ENCODE measurements at regions of chr3 and their contacts with region 1.

Region 1: GRCh38 chr3:150408221-150409102 is at the start of gene TSC22D2:
- DNase-seq: peak; percentile 99
- ATAC-seq: peak; percentile 71
- H3K4me3 Mint-ChIP-seq: peak within 1 kb of the TSS; percentile 94
- H3K27ac Mint-ChIP-seq: peak within 1 kb of the TSS; percentile 99
- H3K4me1 Mint-ChIP-seq: peaks cover 34% of the 10 kb centered on the region
- H3K27me3 Mint-ChIP-seq: no peaks in the 10 kb centered on the region
- CTCF ChIP-seq: no peak
- total RNA-seq, gene TSC22D2: 35.9 and 38.9 TPM in 2 replicates

Region 2: DNA sequence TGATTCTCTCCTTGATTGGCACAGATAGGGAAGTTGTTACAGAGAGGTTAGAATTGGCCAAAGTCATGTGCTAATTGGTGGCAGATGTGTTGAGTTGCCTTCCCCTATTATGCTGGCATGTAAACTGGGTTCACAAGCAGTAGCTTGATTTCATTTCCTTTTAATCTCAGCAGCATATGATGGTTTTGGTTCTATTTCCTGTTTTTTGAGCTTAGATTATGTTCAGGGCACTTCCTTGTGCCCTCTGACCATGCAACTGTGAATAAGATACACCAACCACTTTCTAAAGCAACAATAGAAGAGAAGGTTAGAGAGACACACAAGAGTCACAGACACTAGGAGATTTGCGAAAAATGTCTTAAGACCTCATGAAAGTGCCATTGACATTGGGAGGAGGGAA is 1262.5 kb before region 1 on chr3:
- CTCF ChIA-PET with region 1: no interaction called
- POLR2A ChIA-PET with region 1: no interaction called
- intact Hi-C with region 1: loop called (anchors 10 kb)
- DNase-seq: no peak
- ATAC-seq: peak; percentile 87
- H3K4me3 Mint-ChIP-seq: no peak overlapping the region
- H3K27ac Mint-ChIP-seq: no peak overlapping the region
- H3K4me1 Mint-ChIP-seq: peaks cover 32% of the 10 kb centered on the region
- H3K27me3 Mint-ChIP-seq: no peaks in the 10 kb centered on the region
- CTCF ChIP-seq: no peak

Region 3: GRCh38 chr3:149969940-149970715 is 438.3 kb before region 1 on chr3:
- CTCF ChIA-PET with region 1: interaction called, 3 read pairs
- POLR2A ChIA-PET with region 1: interaction called, 7 read pairs
- intact Hi-C with region 1: loop called (anchors 2 kb)
- DNase-seq: peak; percentile 76
- ATAC-seq: peak; percentile 76
- H3K4me3 Mint-ChIP-seq: peak overlapping the region; percentile 90
- H3K27ac Mint-ChIP-seq: peak overlapping the region; percentile 53
- H3K4me1 Mint-ChIP-seq: peaks cover 23% of the 10 kb centered on the region
- H3K27me3 Mint-ChIP-seq: peaks cover 15% of the 10 kb centered on the region
- CTCF ChIP-seq: no peak

Region 4: DNA sequence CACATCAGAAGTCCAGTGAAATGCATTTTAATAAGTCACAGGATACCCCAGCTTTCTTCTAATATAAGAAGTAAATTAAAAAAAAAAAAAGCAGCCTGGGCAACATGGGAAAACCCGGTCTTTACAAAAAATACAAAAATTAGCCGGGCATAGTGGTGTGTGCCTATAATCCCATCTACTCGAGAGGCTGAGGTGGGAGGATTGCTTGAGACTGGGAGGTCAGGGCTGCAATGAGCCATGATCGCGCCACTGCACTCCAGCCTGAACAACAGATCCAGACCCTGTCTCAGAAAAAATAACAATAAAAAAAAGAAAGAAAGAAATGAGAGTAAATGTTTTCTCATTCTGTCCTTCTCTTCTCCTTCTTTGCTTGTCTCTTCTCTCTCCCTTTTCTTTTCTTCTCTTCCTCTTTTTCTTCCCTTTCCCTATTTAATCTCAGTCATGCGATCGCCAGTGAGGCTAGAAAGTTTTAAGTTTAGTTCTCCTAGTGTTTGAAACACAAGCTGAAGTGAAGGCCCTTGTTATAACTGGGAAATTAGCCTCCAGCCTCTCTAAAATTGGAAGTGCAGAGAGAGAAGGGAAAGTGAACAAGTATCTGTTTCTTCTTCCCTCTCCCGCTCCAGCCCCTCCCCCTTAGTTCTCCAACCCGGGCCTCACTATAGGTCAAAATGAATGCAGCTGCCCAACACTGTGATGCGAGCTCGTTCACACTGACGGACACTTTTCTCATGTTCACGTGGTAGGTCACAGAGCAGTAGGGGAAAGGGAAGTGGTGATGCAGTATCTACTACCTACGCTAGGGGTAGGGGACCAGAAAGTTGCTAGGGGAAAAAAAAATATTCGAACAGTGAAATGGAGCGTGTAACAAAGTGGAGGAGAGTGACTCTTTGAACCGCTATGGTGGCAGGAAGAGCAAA is 23.9 kb before region 1 on chr3:
- CTCF ChIA-PET with region 1: interaction called, 30 read pairs
- POLR2A ChIA-PET with region 1: interaction called, 157 read pairs
- intact Hi-C with region 1: loop called (anchors 1 kb)
- DNase-seq: peak; percentile 47
- ATAC-seq: peak; percentile 95
- H3K4me3 Mint-ChIP-seq: peak overlapping the region; percentile 84
- H3K27ac Mint-ChIP-seq: peak overlapping the region; percentile 98
- H3K4me1 Mint-ChIP-seq: peaks cover 42% of the 10 kb centered on the region
- H3K27me3 Mint-ChIP-seq: no peaks in the 10 kb centered on the region
- CTCF ChIP-seq: no peak

Region 5: DNA sequence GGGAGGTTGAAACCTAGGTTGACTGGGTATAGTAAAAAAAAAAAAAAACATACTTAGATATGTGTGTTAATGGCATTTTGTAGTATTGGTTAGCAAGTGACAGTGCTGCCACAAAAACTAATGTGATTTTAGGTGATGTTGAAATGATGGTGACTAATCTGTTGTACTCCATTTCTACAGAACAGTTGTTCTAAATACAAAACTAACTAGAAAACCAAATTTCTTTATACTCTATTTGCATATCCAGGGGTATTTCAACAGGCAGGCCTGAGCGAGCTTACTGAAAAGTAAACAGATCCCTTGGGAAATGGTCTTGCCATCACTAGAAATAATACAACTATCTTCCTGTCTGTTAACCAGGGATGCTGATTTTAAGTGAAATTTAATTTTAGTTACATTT is 20.1 kb after region 1 on chr3:
- CTCF ChIA-PET with region 1: interaction called, 4 read pairs
- POLR2A ChIA-PET with region 1: interaction called, 12 read pairs
- intact Hi-C with region 1: no loop called
- DNase-seq: no peak
- ATAC-seq: no peak
- H3K4me3 Mint-ChIP-seq: no peak overlapping the region
- H3K27ac Mint-ChIP-seq: no peak overlapping the region
- H3K4me1 Mint-ChIP-seq: peaks cover 61% of the 10 kb centered on the region
- H3K27me3 Mint-ChIP-seq: no peaks in the 10 kb centered on the region
- CTCF ChIP-seq: no peak

Region 6: DNA sequence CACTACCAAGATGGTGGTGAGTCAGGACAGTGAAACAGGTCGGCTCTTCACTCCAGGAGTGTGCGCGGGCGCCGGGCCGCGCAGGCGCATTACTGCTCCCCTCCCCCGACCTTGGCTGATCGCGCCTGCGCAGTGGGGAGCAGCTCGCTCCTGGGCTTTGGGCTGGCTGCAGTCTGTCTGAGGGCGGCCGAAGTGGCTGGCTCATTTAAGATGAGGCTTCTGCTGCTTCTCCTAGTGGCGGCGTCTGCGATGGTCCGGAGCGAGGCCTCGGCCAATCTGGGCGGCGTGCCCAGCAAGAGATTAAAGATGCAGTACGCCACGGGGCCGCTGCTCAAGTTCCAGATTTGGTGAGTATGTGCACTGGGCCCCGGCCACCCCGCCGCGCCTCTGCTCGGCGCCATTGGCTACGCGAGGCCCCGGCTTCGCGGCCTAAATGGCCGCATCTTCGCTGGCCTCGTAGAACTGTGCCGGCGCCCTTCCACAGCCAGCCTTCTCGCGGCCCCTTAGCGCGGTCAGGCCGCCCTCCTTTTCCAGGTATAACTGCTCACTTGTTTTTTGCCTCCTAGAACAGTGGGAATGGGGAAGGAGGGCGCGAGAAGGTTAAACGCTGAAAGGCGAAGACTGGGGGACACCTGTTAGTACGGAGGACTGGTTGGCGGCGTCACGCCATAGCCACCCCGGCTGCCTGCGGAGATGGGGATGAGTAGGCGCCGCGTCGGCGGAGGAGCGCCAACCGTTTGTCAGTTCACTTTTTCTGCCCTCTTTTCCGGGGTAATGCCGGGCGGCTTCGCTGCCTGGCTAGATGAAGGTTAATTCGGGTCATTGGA is 194.9 kb after region 1 on chr3 and contains the start of gene SELENOT:
- CTCF ChIA-PET with region 1: no interaction called
- POLR2A ChIA-PET with region 1: interaction called, 14 read pairs
- intact Hi-C with region 1: loop called (anchors 1 kb)
- DNase-seq: peak; percentile 94
- ATAC-seq: peak; percentile 62
- H3K4me3 Mint-ChIP-seq: peak within 1 kb of the TSS; percentile 100
- H3K27ac Mint-ChIP-seq: peak within 1 kb of the TSS; percentile 100
- H3K4me1 Mint-ChIP-seq: peaks cover 87% of the 10 kb centered on the region
- H3K27me3 Mint-ChIP-seq: no peaks in the 10 kb centered on the region
- CTCF ChIP-seq: no peak
- total RNA-seq, gene SELENOT: 137 and 145 TPM in 2 replicates

Region 7: DNA sequence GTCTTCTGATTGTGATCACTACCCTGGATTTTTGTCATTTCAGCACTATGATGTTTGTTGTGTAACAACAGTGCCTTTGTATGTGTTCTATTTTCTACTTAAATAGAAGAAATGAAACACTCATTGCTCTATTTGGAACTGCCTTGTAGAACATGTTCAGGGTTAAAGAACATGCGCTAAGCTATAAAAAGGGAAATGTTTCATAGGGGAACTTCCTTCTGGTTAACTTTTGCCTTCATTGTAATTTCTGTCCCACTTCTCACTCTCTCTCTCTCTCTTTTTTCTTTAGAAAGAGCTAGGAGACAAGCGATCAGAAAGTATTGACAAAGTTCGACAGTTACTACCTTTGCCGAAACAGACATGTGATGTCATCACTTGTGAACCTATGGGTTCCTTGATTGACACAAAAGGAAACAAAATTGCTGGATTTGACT is 976.3 kb after region 1 on chr3 and contains the start of gene P2RY12:
- CTCF ChIA-PET with region 1: no interaction called
- POLR2A ChIA-PET with region 1: interaction called, 3 read pairs
- intact Hi-C with region 1: loop called (anchors 5 kb)
- DNase-seq: no peak
- ATAC-seq: peak; percentile 29
- H3K4me3 Mint-ChIP-seq: peak within 1 kb of the TSS; percentile 79
- H3K27ac Mint-ChIP-seq: peak within 1 kb of the TSS; percentile 97
- H3K4me1 Mint-ChIP-seq: peaks cover 76% of the 10 kb centered on the region
- H3K27me3 Mint-ChIP-seq: no peaks in the 10 kb centered on the region
- CTCF ChIP-seq: no peak
- total RNA-seq, gene P2RY12: 0.58 and 0.64 TPM in 2 replicates

Region 8: GRCh38 chr3:151620071-151620470 is 1211.6 kb after region 1 on chr3:
- CTCF ChIA-PET with region 1: no interaction called
- POLR2A ChIA-PET with region 1: no interaction called
- intact Hi-C with region 1: no loop called
- DNase-seq: no peak
- ATAC-seq: no peak
- H3K4me3 Mint-ChIP-seq: no peak overlapping the region
- H3K27ac Mint-ChIP-seq: no peak overlapping the region
- H3K4me1 Mint-ChIP-seq: no peaks in the 10 kb centered on the region
- H3K27me3 Mint-ChIP-seq: no peaks in the 10 kb centered on the region
- CTCF ChIP-seq: no peak

Measured in activated B cell treated with CpG ODN at 0.5 μM for 24 hours (primary cell).